ENCODE measurements at regions of chr12 and their contacts with region 1.

Region 1: DNA sequence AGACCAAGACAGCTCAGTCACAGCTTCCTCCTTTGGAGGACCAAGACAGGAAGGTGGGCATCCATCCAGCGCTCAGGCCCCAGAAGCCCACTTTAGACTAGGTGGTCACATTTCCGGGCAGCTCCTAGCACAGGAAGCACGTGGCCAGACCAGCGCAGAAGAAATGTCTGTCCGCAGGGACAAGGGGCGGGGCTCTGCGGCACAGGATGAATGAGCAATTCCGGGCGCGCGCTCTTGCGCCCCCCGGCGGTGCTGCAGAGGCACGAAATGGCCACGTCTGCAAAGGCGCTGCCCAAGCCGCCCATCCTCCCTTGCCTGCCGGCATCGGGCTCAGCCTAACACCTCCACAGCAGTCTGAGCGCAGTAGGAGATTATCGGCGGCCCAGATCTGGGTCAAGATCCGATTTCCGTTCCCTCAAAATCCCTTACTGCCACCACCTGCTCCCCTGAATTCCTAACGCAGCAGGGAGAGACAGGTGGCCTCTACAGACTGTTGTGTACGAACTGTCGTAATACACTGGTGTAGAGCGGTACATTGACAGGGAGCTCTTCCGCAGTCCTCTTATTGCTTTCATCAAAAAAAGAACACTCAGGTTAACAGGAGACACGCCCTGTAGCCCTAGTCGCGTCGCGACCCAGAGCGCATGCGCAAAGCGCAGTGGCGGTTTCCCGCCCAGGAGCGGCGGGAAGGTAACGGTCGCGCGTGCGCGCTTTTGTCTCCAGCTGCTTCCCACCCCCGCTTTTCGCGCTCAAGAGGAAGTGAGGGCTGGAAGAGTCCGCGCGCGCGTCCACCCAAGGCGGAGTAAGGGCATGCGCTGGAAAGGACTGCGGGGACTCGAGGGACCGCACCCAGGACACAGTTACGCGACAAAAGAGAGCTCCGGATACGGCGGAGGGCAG is 794 bp downstream of the TUBA1B start:
- DNase-seq: peak; percentile 85

Region 2: GRCh38 chr12:48882315-48882687 is 248.1 kb before region 1 on chr12:
- CTCF ChIA-PET with region 1: no interaction called
- POLR2A ChIA-PET with region 1: no interaction called
- DNase-seq: no peak

Region 3: GRCh38 chr12:49031553-49032162 is 98.7 kb before region 1 on chr12:
- CTCF ChIA-PET with region 1: no interaction called
- POLR2A ChIA-PET with region 1: no interaction called
- DNase-seq: no peak

Region 4: DNA sequence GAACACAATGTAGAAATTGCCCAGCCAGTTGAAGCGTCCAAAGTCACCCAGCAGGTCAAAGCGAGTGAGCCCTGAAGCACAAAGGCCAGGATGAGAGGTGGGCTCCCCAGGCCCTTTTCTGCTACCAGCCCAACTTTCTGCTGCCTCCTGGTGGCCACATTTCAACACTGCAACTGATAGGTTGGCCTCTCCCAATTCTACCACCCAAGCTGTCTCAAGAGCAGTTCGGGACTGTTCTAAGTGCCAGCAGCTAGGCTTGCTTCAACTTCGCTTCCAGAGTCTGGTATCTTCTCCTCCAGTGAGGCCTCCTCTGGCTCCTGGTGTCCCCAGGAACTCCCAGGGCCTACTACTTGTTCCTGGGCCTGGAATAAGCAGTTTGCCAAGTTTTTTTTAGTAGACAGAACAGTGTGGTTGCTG is 32.4 kb before region 1 on chr12:
- CTCF ChIA-PET with region 1: no interaction called
- POLR2A ChIA-PET with region 1: interaction called, 27 read pairs
- DNase-seq: peak; percentile 78

Region 5: DNA sequence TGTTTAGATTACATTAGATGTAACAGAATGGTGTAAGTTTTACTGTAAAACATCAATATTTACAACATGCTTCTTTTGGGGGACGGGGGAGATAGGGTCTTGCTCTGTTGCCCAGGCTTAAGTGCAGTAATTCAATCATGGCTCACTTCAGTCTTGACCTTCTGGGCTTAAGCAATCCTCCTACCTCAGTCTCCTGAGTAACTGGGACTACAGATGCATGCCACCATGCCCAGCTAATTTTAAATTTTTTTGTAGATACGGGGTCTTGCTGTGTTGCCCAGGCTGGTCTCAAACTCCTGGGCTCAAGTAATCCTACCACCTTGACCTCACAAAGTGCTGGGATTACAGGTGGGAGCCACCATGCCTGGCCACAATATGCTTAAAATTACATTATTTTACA is 34.7 kb after region 1 on chr12:
- CTCF ChIA-PET with region 1: no interaction called
- POLR2A ChIA-PET with region 1: interaction called, 10 read pairs
- DNase-seq: no peak

Region 6: GRCh38 chr12:49212572-49212971 is 82.2 kb after region 1 on chr12:
- CTCF ChIA-PET with region 1: no interaction called
- POLR2A ChIA-PET with region 1: interaction called, 37 read pairs
- DNase-seq: no peak

Region 7: DNA sequence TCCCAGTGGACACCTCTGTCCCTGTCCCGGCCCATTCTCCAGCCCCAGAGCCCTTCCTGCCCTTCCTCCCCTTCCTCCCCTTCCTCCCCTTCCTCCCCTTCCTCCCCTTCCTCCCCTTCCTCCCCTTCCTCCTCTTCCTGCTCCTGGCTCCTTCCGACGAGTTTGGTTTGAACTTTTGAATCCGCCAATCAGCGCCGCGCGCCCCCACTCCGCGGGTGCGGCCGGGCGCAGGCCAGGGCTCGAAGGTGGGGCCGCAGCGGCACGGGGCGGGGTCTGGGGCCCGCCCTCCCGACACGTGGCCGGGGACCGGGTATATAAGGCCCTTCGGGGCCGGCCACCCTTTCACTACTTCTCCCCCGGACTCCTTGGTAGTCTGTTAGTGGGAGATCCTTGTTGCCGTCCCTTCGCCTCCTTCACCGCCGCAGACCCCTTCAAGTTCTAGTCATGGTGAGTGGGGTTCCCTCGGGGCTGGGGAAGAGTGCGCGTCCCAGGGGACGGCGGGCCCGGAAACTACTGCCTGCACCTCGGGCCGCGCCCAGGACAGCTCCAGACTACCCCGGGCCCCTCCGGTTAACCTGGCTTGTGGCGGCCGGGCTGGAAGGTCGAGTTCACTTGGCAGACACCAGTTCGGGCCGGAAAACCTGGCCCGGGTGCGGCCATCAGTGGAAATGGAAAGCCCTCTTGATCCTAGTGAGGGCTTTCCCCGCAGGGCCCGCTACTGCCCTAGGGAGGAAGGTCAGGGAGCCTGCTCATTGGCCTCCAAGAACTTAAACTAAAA is 134.5 kb after region 1 on chr12 and contains the start of gene TUBA1C:
- CTCF ChIA-PET with region 1: no interaction called
- POLR2A ChIA-PET with region 1: interaction called, 16 read pairs
- DNase-seq: peak; percentile 98